ENCODE measurements at regions of chr4 and their contacts with region 1.

Region 1: GRCh38 chr4:87006676-87007527 is 72.1 kb downstream of the AFF1 start:
- DNase-seq: peak; percentile 95 to 96 (median 95)
- ATAC-seq: peak; percentile 90
- H3K4me3 ChIP-seq: peak overlapping the region; percentile 66
- H3K4me1 ChIP-seq: peaks cover 45% of the 10 kb centered on the region
- CTCF ChIP-seq: peak; percentile 6

Region 2: DNA sequence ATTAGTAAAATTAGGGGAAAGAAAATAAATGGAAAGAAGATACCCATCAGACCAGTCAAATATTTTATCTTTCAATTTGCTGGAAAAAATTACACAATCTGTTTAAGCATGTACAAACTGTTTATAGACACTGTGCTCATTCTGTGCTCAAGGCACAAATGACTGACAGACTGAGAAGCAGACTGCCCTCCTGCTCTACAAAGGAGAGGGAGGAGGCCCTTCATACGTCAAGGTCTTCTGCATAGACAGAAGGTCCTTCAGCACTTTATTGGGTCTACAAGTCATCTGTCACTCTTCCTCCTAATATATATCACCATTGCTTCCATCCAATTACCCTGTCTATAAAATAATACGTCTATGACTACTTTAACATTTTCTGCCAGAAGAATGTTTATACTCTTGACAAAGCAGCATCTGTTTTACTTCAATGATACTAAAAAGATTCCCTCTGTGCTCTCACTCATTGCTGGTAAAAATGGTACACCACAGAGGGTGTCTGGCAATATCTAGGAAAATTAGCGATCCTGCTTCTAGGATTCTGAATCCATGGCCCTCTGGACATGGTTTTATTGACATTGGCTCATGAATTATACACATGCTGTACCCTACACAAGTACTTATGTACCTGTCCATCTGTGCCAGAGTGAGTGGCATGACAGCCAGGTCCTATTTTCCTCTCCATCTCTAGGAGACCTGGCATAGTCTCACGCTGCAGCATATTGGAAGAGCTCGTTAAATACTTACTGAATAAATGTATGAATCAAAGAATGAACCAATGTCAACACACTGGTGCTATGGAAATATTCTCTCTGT is 169.0 kb before region 1 on chr4:
- intact Hi-C with region 1: no loop called
- DNase-seq: no peak
- ATAC-seq: no peak
- H3K4me3 ChIP-seq: no peak overlapping the region
- H3K4me1 ChIP-seq: no peaks in the 10 kb centered on the region
- CTCF ChIP-seq: no peak

Region 3: GRCh38 chr4:86855573-86855992 is 151.3 kb before region 1 on chr4:
- intact Hi-C with region 1: no loop called
- DNase-seq: no peak
- ATAC-seq: no peak
- H3K4me3 ChIP-seq: no peak overlapping the region
- H3K4me1 ChIP-seq: no peaks in the 10 kb centered on the region
- CTCF ChIP-seq: no peak

Region 4: GRCh38 chr4:86934771-86935565 is 71.9 kb before region 1 on chr4 and contains the start of gene AFF1:
- intact Hi-C with region 1: loop called (anchors 5 to 10 kb)
- DNase-seq: peak; percentile 91 to 97 (median 97)
- ATAC-seq: peak; percentile 87
- H3K4me3 ChIP-seq: peak within 1 kb of the TSS; percentile 83
- H3K4me1 ChIP-seq: peaks cover 35% of the 10 kb centered on the region
- CTCF ChIP-seq: peak; percentile 45
- total RNA-seq, gene AFF1: 84.0 to 150 (median 120) TPM